ENCODE measurements at regions of chr20 and their contacts with region 1.

Region 1: DNA sequence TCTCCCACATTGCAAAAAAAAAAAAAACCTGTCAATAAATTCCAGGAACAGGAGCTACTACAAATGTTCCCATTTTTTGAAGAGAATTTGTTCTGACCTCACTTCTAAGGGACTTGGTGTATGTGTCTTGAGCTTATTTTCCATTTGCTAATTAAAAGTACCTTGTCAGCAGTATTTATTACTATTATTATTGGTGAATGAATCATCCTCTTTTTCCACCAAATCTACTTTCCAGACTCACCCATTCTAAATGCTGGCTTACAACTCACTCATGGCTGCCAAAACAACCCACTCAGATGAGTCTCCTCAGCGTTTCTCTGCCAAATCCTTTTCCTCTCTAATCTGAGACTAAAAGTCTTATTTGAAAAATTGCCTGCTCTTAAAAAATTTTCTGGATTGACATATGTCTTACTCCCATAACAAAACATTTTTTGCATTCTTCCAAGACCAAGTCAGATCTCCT is 33.2 kb upstream of the TASP1 start:
- DNase-seq: peak in 1 of 2 donors; percentile 73
- ATAC-seq: peak; percentile 88
- H3K4me3 ChIP-seq: no peak overlapping the region
- H3K27ac ChIP-seq: peak overlapping the region in 1 of 2 donors; percentile 9
- H3K4me1 ChIP-seq: no peaks in the 10 kb centered on the region
- H3K27me3 ChIP-seq: no peaks in the 10 kb centered on the region

Region 2: GRCh38 chr20:13610184-13610583 is 61.8 kb before region 1 on chr20:
- intact Hi-C with region 1: loop called in 1 of 2 experiments (anchors 5 kb)
- DNase-seq: no peak
- ATAC-seq: no peak
- H3K4me3 ChIP-seq: no peak overlapping the region
- H3K27ac ChIP-seq: no peak overlapping the region
- H3K4me1 ChIP-seq: no peaks in the 10 kb centered on the region
- H3K27me3 ChIP-seq: no peaks in the 10 kb centered on the region

Region 3: GRCh38 chr20:13625304-13625979 is 46.5 kb before region 1 on chr20:
- intact Hi-C with region 1: loop called in 1 of 2 experiments (anchors 5 kb)
- DNase-seq: no peak
- ATAC-seq: no peak
- H3K4me3 ChIP-seq: no peak overlapping the region
- H3K27ac ChIP-seq: peak overlapping the region; percentile 64
- H3K4me1 ChIP-seq: peaks cover 0 to 1% of the 10 kb centered on the region in 2 donors
- H3K27me3 ChIP-seq: no peaks in the 10 kb centered on the region

Region 4: GRCh38 chr20:13744352-13744751 is 72.4 kb after region 1 on chr20:
- intact Hi-C with region 1: loop called in 1 of 2 experiments (anchors 5 kb)
- DNase-seq: no peak
- ATAC-seq: no peak
- H3K4me3 ChIP-seq: no peak overlapping the region
- H3K27ac ChIP-seq: no peak overlapping the region
- H3K4me1 ChIP-seq: peaks cover 0 to 2% of the 10 kb centered on the region in 2 donors
- H3K27me3 ChIP-seq: no peaks in the 10 kb centered on the region

Measured in aorta (tissue), 5 donors.